ENCODE measurements at regions of chr2 and their contacts with region 1.

Region 1: DNA sequence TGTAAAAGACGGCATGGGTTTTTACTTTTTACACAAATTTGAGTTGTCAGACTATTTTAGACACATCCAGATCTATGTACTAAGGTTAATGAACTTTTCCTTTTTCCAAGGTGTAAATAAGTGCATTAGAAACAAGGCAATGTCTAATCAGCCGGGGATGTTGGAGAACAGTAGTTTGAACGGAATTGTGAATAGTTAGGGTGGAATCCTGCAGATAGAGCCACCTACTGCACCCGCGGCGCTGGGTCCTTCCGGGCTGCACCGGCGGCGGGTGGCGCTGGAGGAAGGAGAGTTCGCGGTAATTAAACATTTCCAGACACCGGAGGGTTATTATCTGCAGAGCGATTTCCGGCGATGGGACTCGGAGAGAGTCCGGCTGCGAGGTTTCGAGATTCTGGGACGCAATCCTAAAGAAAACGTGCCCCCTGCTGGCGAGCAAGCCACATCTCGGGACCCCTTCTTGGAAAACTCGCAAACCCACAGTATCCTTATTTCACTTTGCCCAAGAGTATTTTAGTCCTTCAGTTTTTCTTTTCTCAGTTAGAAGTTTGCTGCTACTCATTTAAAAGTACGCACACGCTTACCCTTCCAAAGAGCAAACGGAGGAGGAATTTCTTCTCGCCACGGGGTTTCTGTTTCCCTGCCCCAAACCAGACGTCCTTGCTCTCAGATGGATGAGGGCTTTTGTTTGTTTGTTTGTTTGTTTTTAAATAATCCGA is 4.5 kb upstream of the OSR1 start:
- DNase-seq: peak; percentile 84
- ATAC-seq: peak; percentile 63

Region 2: DNA sequence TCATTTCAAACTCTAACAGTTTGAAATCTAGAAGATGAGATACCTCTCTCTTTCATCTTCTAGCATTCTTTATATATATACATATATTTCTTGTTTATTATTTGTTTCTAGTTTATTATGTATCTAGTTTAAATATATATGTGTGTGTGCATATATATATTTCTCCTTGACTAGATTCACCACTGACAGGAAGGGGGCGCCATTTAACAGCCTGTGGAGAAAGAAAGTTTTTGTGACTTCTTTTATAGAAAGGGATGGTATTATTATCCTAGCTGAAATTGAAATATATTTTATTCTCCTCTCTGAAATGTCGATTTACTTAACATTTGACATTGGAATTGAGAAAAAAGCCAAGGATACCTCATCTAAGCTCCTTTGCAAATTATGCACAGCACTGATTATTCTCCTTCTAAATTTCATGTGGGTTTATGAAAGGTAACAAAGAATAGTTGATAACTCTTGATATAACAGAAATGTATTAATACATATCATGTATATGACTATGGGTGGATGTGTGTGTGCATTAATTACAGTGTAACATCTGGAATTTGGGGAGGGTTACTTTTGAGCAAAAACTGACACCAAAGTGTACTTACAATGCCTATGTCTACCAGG is 612.9 kb before region 1 on chr2:
- intact Hi-C with region 1: loop called (anchors 2 kb)
- DNase-seq: no peak
- ATAC-seq: no peak

Region 3: DNA sequence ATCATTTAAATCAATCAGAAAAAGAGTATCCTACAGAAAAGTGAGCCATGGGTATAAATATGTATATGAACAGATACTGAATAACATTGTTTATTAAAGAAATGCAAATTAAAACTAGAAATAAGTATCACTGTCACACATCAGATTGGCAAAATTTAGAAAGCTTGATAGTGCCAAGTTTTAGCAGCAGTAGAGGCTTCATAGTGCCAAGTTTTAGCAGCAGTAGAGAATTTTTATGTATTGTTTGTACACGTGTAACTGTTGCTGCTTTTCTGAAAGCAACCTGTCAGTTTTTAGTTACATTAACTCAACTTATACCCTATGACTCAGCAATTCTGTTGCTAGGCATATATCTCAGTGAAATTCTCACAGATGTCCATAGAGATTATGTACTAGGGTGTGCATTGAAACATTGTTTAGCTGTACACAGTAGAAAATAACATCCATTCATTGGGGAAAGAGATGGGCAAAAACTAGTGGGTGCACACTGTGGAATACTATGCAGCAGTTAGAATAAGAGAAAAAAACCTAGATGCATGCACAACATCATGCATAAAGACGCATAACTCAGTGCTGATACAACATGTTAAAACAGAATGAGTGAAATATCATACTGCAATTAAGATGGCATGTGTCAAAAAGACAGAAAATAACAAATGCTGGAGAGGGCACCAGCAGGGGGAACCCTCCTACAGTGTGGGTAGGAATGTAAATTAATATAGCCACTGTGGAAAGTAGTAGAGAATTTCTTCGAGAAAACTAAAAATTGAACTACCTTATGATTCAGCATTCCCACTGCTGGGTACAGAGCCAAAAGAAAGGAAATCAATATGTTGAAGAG is 479.1 kb before region 1 on chr2:
- intact Hi-C with region 1: loop called (anchors 5 kb)
- DNase-seq: no peak
- ATAC-seq: no peak

Region 4: DNA sequence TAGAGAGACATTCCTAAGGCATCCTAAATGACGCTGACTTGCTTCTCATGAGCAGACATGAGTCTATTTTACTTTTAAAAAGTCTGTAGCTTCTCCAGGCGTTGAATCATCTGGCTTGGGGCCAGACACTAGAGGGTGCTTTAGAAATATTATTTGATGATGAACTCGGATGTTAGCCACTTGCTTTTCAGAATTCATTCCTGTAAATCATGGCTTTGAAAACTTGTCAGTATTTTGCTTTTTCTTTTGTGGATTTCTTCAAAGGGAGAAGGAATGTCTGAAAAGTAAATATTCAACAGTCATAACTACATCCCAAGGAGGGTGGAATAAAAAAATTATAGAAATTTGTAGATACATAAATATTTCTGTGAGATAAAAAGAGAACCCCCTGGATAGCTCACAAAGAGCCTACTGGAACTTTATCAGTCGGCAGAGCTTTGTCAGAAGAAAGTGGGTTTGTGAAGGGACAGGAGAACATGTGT is 375.3 kb before region 1 on chr2:
- intact Hi-C with region 1: loop called (anchors 5 kb)
- DNase-seq: peak; percentile 72
- ATAC-seq: peak; percentile 36

Region 5: DNA sequence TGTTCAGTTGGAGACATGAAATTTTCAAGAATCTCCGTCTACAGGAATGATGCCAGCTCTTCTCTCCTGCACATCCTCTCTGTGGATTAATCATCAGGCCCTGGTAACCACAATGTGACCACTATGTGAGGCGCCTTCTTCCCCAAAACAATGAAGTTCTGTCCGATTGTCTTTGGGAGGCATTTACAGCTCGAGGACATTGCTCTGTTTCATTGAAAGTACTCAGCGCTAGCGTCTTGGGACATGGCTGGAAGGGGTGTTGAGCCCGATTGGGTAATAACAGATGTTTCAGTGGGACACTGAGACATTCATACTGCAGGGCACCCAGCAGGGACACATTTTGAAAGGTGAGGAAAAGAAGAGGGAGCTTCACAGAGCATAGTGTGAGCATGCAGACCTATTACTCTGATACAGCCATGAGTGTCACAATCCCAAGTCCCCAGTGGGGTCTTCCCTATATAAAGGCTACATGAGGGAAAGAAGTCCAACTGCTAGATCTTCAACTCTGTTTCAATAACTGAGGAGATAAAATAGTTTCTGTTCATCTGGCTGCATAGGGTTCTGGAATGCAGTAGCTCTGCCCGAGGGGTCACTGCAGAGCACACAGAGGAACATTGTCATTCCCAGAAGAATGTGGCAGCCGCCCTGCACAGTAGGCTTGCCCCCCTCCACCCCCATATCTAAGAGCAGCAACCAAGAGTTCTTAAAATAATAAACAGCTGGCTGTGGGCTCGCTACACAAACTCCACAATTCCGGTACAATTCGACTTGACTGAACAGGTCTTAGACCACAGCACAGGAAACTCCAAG is 241.8 kb before region 1 on chr2:
- intact Hi-C with region 1: no loop called
- DNase-seq: no peak
- ATAC-seq: peak; percentile 90

Region 6: DNA sequence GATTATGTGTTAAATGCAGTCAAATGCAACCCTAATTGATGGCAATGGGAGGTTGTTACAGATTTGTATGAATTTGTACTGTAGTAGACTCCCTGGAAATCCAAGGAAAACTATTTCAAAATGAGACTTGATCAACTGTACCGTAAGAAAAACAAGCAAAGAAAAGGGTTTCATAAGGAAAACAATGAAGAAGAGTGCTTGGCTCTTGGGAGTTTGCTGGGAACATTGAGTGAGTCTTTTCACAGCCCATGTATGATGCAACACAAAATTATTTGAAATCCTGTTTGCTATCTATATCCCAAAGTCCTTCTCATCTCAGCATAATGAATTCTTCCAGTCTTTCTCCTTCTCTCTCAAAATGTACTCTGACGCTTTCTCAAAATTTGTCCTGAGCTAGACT is 62.5 kb after region 1 on chr2:
- intact Hi-C with region 1: no loop called
- DNase-seq: no peak
- ATAC-seq: peak; percentile 70

Region 7: GRCh38 chr2:19667085-19667484 is 304.2 kb after region 1 on chr2:
- intact Hi-C with region 1: loop called (anchors 5 kb)
- DNase-seq: no peak
- ATAC-seq: peak; percentile 68

Measured in Right ventricle myocardium inferior (tissue), 1 donor.